Endothelial cell of umbilical vein (primary cell): ENCODE measurements at regions of chr6 and their contacts with region 1.

Region 1: GRCh38 chr6:79544939-79545450 is 7.8 kb upstream of the LCA5 start:
- DNase-seq: peak; percentile 99
- H3K4me3 ChIP-seq: no peak overlapping the region
- H3K27ac ChIP-seq: peak overlapping the region; percentile 86
- H3K4me1 ChIP-seq: peaks cover 24% of the 10 kb centered on the region
- H3K27me3 ChIP-seq: no peaks in the 10 kb centered on the region
- CTCF ChIP-seq: peak; percentile 60 to 62
- POLR2A ChIP-seq: peak; percentile 28

Region 2: DNA sequence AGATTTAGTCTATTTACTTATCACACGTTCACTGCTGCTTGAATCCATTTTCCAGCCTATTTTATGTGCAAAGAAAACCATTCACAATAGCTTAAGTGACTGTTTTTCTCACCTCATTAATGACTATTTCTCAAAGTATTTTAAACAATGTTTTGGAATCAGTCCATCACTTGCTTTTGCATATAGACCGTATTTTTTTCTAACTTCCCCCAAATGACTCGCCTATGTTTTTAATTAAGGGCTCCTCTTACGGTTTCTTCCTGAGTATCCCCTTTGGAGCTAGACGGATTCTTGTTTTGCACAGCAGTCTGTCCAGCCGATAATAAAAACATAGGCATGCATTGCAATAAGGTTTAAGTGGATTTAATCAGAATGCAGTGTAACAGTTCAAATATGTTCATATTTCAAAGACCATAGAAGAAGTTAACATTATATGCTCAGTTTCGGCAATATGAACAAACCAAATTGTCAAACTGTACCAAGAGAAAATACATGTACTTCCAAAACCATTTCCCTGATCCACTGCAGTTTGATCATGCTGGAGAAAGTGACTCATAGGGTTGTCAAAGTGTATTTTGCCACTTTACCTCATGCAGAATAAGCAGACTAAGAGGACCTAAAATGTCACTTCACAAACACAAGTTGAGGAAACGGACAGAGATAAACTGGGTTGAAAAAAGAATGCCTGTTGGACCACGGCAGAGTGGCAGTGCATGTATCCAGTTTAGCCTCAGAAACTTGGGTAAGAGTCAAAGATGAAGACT is 376.9 kb before region 1 on chr6:
- CTCF ChIA-PET with region 1: no interaction called
- POLR2A ChIA-PET with region 1: no interaction called
- dilution Hi-C with region 1: no loop called
- intact Hi-C with region 1: no loop called
- DNase-seq: peak; percentile 76
- H3K4me3 ChIP-seq: no peak overlapping the region
- H3K27ac ChIP-seq: no peak overlapping the region
- H3K4me1 ChIP-seq: peaks cover 13% of the 10 kb centered on the region
- H3K27me3 ChIP-seq: no peaks in the 10 kb centered on the region
- CTCF ChIP-seq: no peak
- POLR2A ChIP-seq: no peak

Region 3: DNA sequence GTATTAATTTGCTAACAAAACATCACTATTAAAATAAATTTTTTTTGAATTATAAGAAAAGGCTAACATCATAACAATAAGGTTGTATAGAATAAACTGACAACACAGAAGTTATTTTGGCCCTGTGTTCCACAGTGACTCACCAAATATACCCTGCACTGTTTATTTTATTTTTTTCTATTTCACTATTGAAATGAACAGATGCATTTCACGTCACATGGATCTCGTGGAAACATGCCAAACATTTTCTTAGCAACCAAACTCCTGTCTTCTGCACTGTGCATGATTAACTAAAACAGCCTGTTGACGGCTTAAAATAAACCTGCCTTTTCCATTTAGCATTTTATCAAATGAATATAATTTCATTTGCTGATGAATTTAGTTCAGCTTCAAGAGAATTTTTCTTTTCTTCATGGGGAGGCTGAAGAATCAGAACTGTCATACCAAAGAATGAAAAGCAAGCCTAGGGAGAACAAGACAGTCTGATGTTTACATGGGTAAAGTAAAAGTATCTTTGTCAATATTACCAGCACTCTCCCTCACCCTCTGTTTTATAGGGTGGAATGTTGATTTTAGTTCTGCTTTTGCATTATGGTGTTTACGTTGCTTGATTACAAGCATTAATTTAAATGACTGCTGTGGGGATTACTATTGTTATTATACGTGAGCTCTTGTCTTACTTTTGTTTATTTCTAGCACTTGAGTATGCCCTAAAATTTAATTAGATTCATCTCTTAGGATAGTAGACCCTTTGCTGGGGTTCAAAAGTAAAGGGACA is 123.1 kb before region 1 on chr6:
- CTCF ChIA-PET with region 1: no interaction called
- POLR2A ChIA-PET with region 1: no interaction called
- dilution Hi-C with region 1: no loop called
- intact Hi-C with region 1: loop called (anchors 2 kb)
- DNase-seq: peak; percentile 99
- H3K4me3 ChIP-seq: no peak overlapping the region
- H3K27ac ChIP-seq: peak overlapping the region; percentile 24
- H3K4me1 ChIP-seq: peaks cover 17% of the 10 kb centered on the region
- H3K27me3 ChIP-seq: no peaks in the 10 kb centered on the region
- CTCF ChIP-seq: no peak
- POLR2A ChIP-seq: no peak

Region 4: GRCh38 chr6:79756496-79756895 is 211.5 kb after region 1 on chr6:
- CTCF ChIA-PET with region 1: no interaction called
- POLR2A ChIA-PET with region 1: no interaction called
- dilution Hi-C with region 1: no loop called
- intact Hi-C with region 1: loop called (anchors 1 kb)
- DNase-seq: peak; percentile 43
- H3K4me3 ChIP-seq: no peak overlapping the region
- H3K27ac ChIP-seq: peak overlapping the region; percentile 30
- H3K4me1 ChIP-seq: peaks cover 26% of the 10 kb centered on the region
- H3K27me3 ChIP-seq: no peaks in the 10 kb centered on the region
- CTCF ChIP-seq: no peak
- POLR2A ChIP-seq: no peak